MCF 10A (cell line): ENCODE measurements at regions of chr3 and their contacts with region 1.

Region 1: DNA sequence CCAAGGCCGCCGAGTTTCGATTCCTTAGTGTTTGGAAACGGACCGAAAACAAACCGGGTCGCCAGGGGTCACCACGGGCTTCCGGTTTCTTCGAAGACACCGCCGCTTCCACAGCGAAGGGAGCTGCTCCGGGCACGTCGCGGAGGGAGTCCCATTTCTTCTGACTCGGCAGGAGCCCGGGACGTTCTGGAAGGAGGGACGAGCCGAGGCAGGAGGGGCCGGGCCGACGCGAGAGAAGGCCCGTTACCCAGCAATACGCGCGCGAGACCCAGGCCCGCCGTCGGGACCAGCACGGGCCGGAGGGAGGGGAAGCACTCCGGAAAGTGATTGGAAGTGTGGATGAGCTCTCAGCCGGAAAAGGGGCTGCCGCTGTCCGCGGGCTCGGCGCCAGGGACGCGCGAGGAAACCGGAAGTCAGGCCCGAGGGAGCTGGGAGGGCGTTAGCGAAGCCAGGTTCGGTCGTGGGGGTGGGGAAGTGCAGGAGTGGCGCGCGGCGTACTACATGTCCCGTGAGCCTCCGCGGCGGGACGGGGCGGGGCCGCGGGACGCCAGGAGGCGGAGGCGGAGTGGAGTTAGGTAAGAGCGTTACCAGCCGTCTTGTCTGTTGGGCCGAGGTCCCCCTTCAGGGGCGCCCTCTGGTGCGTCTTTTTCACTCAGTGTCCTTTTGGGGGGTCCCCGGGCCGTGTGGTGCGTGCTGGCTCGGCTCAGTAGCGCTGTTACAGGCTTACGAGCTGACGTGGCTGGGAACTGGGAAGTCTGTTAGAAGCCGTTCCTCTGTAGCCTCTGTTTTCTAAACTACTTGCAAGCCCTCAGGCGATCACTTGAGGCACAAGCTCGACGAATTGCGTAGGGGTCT is at the starts of genes AZI2 and ZCWPW2:
- DNase-seq: peak; percentile 96
- H3K4me3 Mint-ChIP-seq: peak within 1 kb of the TSS; percentile 95
- H3K27ac Mint-ChIP-seq: peak within 1 kb of the TSS; percentile 100
- H3K4me1 Mint-ChIP-seq: no peaks in the 10 kb centered on the region
- H3K27me3 Mint-ChIP-seq: no peaks in the 10 kb centered on the region
- CTCF ChIP-seq: peak; percentile 9
- total RNA-seq, gene AZI2: 140 and 177 TPM in 2 replicates
- total RNA-seq, gene ZCWPW2: 0.77 and 1.0 TPM in 2 replicates

Region 2: GRCh38 chr3:28334552-28334951 is 14.3 kb before region 1 on chr3:
- CTCF ChIA-PET with region 1: interaction called, 4 read pairs
- POLR2A ChIA-PET with region 1: interaction called, 16 read pairs
- intact Hi-C with region 1: no loop called
- DNase-seq: no peak
- H3K4me3 Mint-ChIP-seq: no peak overlapping the region
- H3K27ac Mint-ChIP-seq: no peak overlapping the region
- H3K4me1 Mint-ChIP-seq: no peaks in the 10 kb centered on the region
- H3K27me3 Mint-ChIP-seq: no peaks in the 10 kb centered on the region
- CTCF ChIP-seq: no peak

Region 3: GRCh38 chr3:28376424-28376823 is 27.6 kb after region 1 on chr3:
- CTCF ChIA-PET with region 1: interaction called, 5 read pairs
- POLR2A ChIA-PET with region 1: interaction called, 60 read pairs
- intact Hi-C with region 1: loop called (anchors 1 kb)
- DNase-seq: peak; percentile 94
- H3K4me3 Mint-ChIP-seq: peak overlapping the region; percentile 46
- H3K27ac Mint-ChIP-seq: peak overlapping the region; percentile 94
- H3K4me1 Mint-ChIP-seq: peaks cover 14% of the 10 kb centered on the region
- H3K27me3 Mint-ChIP-seq: no peaks in the 10 kb centered on the region
- CTCF ChIP-seq: no peak

Region 4: DNA sequence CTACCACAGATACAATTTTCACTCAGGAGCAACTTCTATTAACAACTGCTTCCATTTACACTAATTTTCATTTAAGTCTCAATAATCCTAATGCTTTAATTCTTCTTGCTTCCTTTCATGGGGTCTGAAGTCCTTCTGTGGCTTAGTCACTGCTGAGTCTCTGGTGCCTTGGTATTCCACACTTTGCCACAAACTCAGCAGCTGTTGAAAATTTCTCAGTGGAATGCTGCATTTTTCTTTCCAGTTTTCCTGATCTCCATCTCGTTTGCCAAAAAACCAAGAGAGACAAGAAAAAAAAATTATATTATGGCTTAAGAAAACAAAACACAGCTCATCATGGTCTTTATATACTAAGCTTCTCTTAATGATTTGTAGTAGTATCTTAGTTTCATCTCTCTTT is 269.0 kb after region 1 on chr3:
- CTCF ChIA-PET with region 1: no interaction called
- POLR2A ChIA-PET with region 1: no interaction called
- intact Hi-C with region 1: no loop called
- DNase-seq: no peak
- H3K4me3 Mint-ChIP-seq: no peak overlapping the region
- H3K27ac Mint-ChIP-seq: no peak overlapping the region
- H3K4me1 Mint-ChIP-seq: no peaks in the 10 kb centered on the region
- H3K27me3 Mint-ChIP-seq: no peaks in the 10 kb centered on the region
- CTCF ChIP-seq: no peak